GM12878 (cell line): ENCODE measurements at regions of chr15 and their contacts with region 1.

Region 1: GRCh38 chr15:40452296-40453090 is 11.7 kb downstream of the BAHD1 start:
- DNase-seq: no peak
- ATAC-seq: peak; percentile 83
- H3K4me3 ChIP-seq: no peak overlapping the region
- H3K27ac ChIP-seq: peak overlapping the region; percentile 5
- H3K4me1 ChIP-seq: peaks cover 41% of the 10 kb centered on the region
- H3K27me3 ChIP-seq: no peaks in the 10 kb centered on the region
- CTCF ChIP-seq: no peak
- EP300 ChIP-seq: no peak
- POLR2A ChIP-seq: no peak
- RAD21 ChIP-seq: no peak

Region 2: DNA sequence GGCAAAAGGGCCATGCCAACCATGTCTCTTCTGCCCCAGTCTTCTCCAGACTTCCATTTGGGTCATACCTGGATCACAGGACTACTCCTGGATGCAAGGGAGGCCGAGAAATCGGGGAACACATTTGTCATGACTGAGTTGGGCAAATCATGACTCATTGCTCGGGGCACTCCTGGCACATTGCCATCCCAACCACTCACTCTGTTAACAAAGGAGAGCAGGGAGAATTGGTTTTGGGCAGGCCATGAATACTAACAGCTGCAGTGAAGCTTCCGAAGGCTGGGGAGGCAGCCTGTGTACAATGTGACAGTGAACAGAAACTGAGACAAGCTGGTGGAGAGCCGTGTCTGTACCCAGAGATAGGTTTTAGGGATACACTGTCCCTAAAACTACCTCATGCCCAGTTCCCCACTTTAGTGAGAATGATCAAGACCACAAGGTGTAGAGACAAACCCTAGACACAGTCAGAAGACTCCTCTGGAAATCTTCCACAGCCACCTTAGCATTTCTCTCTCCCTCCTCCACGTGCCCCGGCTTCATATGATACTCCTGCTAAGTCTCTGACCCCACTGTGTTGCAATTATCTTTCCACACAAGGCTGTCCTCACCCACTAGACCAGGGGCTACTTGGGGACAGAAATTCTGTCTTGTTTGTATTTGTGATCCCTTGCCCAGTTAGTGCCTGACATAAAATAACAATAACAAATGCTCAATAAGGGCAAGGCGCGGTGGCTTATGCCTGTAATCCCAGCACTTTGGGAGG is 302.1 kb before region 1 on chr15:
- CTCF ChIA-PET with region 1: no interaction called
- POLR2A ChIA-PET with region 1: no interaction called
- RAD21 ChIA-PET with region 1: no interaction called
- SMC1A ChIA-PET with region 1: no interaction called
- in situ Hi-C with region 1: no loop called
- intact Hi-C with region 1: no loop called
- DNase-seq: no peak
- ATAC-seq: no peak
- H3K4me3 ChIP-seq: no peak overlapping the region
- H3K27ac ChIP-seq: no peak overlapping the region
- H3K4me1 ChIP-seq: peaks cover 2% of the 10 kb centered on the region
- H3K27me3 ChIP-seq: no peaks in the 10 kb centered on the region
- CTCF ChIP-seq: no peak
- EP300 ChIP-seq: no peak
- POLR2A ChIP-seq: no peak
- RAD21 ChIP-seq: no peak

Region 3: DNA sequence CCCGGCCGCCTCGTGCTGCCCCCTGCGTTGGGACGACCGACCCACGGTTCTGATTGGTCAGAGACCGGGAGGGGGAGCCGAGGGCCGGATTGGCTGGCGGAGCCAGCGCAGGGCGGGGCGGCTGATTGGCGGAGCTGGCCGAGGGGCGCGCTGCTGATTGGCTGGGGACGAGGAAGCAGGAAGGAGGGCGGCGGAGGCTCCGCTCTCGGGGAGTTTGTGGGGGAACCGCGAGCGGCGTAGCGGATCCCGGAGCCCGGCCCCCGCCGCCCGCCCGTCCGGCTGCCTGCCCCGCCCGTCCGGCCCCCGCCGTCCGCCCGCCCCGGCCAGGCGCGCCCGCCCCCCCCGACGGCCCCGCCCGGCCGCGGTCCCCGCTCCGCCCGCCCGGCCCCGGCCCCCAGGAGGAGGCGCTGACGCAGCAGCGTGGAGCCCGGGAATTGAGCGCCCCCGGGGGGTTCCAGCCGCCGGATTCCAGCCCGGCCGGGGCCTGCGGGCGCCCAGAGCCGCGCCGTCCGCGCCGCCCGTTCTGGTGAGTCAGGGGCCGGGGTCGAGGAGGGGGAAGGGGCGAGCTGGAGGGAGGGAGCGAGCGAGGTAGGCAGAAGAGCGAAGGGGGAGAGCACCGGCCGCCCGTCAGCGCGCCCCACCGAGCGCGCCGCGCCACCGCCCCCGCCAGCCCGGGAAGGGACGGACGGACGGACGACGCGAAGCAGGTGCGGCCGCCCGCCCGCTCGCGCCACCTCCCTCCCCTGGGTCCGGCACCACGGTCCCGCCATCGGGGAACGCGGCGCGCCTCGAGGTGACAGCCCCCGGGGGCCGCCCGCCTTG is 11.5 kb before region 1 on chr15 and contains the start of gene BAHD1:
- CTCF ChIA-PET with region 1: interaction called, 12 read pairs
- POLR2A ChIA-PET with region 1: interaction called, 26 read pairs
- RAD21 ChIA-PET with region 1: interaction called, 9 read pairs
- SMC1A ChIA-PET with region 1: interaction called, 5 read pairs
- in situ Hi-C with region 1: no loop called
- intact Hi-C with region 1: no loop called
- DNase-seq: peak; percentile 76
- ATAC-seq: peak; percentile 92
- H3K4me3 ChIP-seq: peak within 1 kb of the TSS; percentile 86
- H3K27ac ChIP-seq: peak within 1 kb of the TSS; percentile 33; the same call in 1 of the 2 replicates
- H3K4me1 ChIP-seq: peaks cover 19% of the 10 kb centered on the region
- H3K27me3 ChIP-seq: peaks cover 11 to 19% of the 10 kb centered on the region in 2 experiments
- CTCF ChIP-seq: peak in 1 of 3 experiments; percentile 18; a peak in 2 of 6 replicates
- EP300 ChIP-seq: no peak
- POLR2A ChIP-seq: peak; percentile 78
- RAD21 ChIP-seq: 0 out of 2 replicates have a peak, but pooled peaks have one; percentile 21
- polyA plus RNA-seq, gene BAHD1: 0.21 to 0.88 TPM

Region 4: GRCh38 chr15:41085029-41085428 is 632.5 kb after region 1 on chr15:
- CTCF ChIA-PET with region 1: no interaction called
- POLR2A ChIA-PET with region 1: no interaction called
- RAD21 ChIA-PET with region 1: no interaction called
- SMC1A ChIA-PET with region 1: no interaction called
- in situ Hi-C with region 1: no loop called
- intact Hi-C with region 1: no loop called
- DNase-seq: no peak
- ATAC-seq: no peak
- H3K4me3 ChIP-seq: no peak overlapping the region
- H3K27ac ChIP-seq: no peak overlapping the region
- H3K4me1 ChIP-seq: peaks cover 4% of the 10 kb centered on the region; the same call in 1 of the 2 replicates
- H3K27me3 ChIP-seq: no peaks in the 10 kb centered on the region
- CTCF ChIP-seq: no peak
- EP300 ChIP-seq: no peak
- POLR2A ChIP-seq: no peak
- RAD21 ChIP-seq: no peak